ENCODE measurements at regions of chr6 and their contacts with region 1.

Region 1: DNA sequence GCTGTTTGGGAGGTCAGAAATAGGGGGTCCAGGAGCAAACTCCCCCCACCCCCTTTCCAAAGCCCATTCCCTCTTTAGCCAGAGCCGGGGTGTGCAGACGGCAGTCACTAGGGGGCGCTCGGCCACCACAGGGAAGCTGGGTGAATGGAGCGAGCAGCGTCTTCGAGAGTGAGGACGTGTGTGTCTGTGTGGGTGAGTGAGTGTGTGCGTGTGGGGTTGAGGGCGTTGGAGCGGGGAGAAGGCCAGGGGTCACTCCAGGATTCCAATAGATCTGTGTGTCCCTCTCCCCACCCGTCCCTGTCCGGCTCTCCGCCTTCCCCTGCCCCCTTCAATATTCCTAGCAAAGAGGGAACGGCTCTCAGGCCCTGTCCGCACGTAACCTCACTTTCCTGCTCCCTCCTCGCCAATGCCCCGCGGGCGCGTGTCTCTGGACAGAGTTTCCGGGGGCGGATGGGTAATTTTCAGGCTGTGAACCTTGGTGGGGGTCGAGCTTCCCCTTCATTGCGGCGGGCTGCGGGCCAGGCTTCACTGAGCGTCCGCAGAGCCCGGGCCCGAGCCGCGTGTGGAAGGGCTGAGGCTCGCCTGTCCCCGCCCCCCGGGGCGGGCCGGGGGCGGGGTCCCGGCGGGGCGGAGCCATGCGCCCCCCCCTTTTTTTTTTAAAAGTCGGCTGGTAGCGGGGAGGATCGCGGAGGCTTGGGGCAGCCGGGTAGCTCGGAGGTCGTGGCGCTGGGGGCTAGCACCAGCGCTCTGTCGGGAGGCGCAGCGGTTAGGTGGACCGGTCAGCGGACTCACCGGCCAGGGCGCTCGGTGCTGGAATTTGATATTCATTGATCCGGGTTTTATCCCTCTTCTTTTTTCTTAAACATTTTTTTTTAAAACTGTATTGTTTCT is at the start of gene VEGFA:
- DNase-seq: peak; percentile 81 to 93 (median 85)
- ATAC-seq: peak; percentile 84
- H3K4me3 ChIP-seq: peak within 1 kb of the TSS; percentile 62
- H3K4me3 Mint-ChIP-seq: peak within 1 kb of the TSS; percentile 88
- H3K27ac ChIP-seq: no peak within 1 kb of the TSS
- H3K27ac Mint-ChIP-seq: peak within 1 kb of the TSS; percentile 39
- H3K4me1 ChIP-seq: peaks cover 33% of the 10 kb centered on the region
- H3K4me1 Mint-ChIP-seq: peaks cover 22% of the 10 kb centered on the region
- H3K27me3 ChIP-seq: peaks cover 27 to 28% of the 10 kb centered on the region in 2 experiments
- H3K27me3 Mint-ChIP-seq: peaks cover 38% of the 10 kb centered on the region
- CTCF ChIP-seq: peak; percentile 94
- total RNA-seq, gene VEGFA: 3.5 to 3.7 TPM

Region 2: DNA sequence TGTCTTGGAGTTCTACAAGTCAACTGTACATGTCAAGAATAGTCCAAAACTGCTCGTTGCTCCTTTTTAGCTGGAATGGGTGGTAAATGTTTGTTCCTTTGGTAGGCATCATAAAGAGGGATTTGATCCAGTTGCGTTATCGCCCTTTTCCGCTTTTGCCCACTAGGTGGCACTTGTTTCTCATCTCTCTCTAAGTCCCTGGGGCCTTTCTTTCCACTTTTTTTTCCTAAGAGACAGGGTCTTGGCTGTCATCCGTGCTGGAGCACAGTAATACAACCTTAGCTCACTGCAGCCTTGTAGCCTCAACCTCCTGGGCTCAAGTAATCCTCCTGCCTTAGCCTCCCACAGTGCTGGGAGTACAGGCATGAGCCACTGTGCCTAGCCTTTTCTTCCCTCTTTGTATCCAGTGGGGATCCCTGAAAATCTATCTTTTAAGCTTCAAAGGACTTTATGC is 161.4 kb before region 1 on chr6:
- CTCF ChIA-PET with region 1: no interaction called
- POLR2A ChIA-PET with region 1: no interaction called
- intact Hi-C with region 1: loop called in 1 of 2 experiments (anchors 10 kb)
- DNase-seq: peak; percentile 32 to 77 (median 49)
- ATAC-seq: peak; percentile 48
- H3K4me3 ChIP-seq: no peak overlapping the region
- H3K4me3 Mint-ChIP-seq: no peak overlapping the region
- H3K27ac ChIP-seq: no peak overlapping the region
- H3K27ac Mint-ChIP-seq: no peak overlapping the region
- H3K4me1 ChIP-seq: no peaks in the 10 kb centered on the region
- H3K4me1 Mint-ChIP-seq: no peaks in the 10 kb centered on the region
- H3K27me3 ChIP-seq: no peaks in the 10 kb centered on the region
- H3K27me3 Mint-ChIP-seq: no peaks in the 10 kb centered on the region
- CTCF ChIP-seq: peak; percentile 91

Region 3: DNA sequence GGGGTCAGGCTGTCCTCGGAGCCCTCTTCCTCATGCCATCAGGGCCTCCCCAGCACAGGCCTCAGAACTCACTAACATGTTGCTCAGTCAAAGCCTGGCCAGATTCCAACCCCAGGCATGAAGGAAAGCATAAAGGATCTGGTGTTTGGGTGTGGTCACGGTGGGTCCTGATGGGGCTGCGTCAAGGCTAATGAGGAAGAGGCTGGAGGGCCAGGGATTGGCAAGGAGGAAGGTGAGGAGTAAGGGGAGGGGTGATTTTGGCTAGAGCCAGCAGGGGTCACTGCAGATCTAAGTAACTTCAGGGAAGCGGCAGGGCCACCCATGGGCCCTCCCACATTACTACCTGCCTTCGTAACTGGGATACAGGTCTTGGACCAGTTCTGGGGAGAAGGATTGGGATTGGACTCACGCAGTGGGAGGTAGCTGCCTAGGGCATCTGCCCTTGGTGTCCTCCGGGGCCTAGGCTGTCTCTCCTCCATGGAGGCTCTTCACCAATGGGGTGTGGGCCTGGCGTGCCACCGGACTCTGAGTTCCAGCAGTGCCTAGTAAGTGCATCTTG is 46.0 kb before region 1 on chr6:
- CTCF ChIA-PET with region 1: interaction called, 5 read pairs
- POLR2A ChIA-PET with region 1: interaction called, 4 read pairs
- intact Hi-C with region 1: loop called (anchors 2 kb)
- DNase-seq: peak; percentile 43 to 85 (median 58)
- ATAC-seq: peak; percentile 68
- H3K4me3 ChIP-seq: no peak overlapping the region
- H3K4me3 Mint-ChIP-seq: no peak overlapping the region
- H3K27ac ChIP-seq: no peak overlapping the region
- H3K27ac Mint-ChIP-seq: peak overlapping the region; percentile 85
- H3K4me1 ChIP-seq: peaks cover 28% of the 10 kb centered on the region
- H3K4me1 Mint-ChIP-seq: peaks cover 30% of the 10 kb centered on the region
- H3K27me3 ChIP-seq: no peaks in the 10 kb centered on the region
- H3K27me3 Mint-ChIP-seq: no peaks in the 10 kb centered on the region
- CTCF ChIP-seq: peak; percentile 72

Region 4: DNA sequence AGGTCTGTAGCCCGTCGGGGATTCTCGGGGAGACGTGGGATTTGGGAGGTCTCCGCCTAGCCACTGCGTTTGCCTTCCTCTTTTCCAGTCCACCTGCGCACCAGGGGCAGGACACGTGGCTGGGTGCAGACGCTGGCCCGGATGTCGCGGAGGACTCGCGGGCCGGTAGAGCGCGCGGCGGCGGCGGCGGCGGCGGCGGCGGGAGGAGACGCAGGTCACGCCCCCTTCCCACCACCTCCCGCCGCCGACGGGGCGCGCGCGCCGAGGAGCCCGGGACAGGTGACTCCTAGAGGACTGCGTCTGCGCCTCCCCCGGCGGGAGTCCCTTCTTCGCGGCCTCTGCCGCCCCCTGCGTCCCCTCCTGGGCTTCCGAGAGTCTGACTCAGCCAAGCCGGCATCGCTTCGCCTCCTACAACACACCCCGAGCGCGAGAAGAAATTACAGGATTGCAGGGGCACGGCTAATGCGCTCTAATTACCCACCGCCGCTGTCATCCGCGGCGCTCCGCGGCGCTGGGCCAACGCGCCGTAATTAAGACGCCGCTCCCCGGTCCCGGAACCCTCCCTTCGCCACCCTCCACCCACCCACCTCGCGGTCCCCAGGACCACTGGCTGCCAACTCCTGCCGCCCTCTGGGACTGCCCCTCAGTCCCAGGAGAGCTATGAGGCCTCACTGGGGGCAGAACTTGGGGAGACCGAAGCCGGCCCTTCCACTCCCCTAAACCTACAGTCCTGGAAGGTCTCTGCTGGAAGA is 233.0 kb after region 1 on chr6:
- CTCF ChIA-PET with region 1: no interaction called
- POLR2A ChIA-PET with region 1: no interaction called
- intact Hi-C with region 1: loop called in 1 of 2 experiments (anchors 5 kb)
- DNase-seq: peak; percentile 15 to 77 (median 46)
- ATAC-seq: peak; percentile 77
- H3K4me3 ChIP-seq: peak overlapping the region; percentile 53
- H3K4me3 Mint-ChIP-seq: peak overlapping the region; percentile 76
- H3K27ac ChIP-seq: no peak overlapping the region
- H3K27ac Mint-ChIP-seq: no peak overlapping the region
- H3K4me1 ChIP-seq: peaks cover 17% of the 10 kb centered on the region
- H3K4me1 Mint-ChIP-seq: peaks cover 13% of the 10 kb centered on the region
- H3K27me3 ChIP-seq: peaks cover 35 to 47% of the 10 kb centered on the region in 2 experiments
- H3K27me3 Mint-ChIP-seq: peaks cover 59% of the 10 kb centered on the region
- CTCF ChIP-seq: no peak